Activated CD8-positive, alpha-beta T cell treated with anti-CD3 and anti-CD28 coated beads for 36 hours (primary cell): ENCODE measurements at regions of chr2 and their contacts with region 1.

Region 1: DNA sequence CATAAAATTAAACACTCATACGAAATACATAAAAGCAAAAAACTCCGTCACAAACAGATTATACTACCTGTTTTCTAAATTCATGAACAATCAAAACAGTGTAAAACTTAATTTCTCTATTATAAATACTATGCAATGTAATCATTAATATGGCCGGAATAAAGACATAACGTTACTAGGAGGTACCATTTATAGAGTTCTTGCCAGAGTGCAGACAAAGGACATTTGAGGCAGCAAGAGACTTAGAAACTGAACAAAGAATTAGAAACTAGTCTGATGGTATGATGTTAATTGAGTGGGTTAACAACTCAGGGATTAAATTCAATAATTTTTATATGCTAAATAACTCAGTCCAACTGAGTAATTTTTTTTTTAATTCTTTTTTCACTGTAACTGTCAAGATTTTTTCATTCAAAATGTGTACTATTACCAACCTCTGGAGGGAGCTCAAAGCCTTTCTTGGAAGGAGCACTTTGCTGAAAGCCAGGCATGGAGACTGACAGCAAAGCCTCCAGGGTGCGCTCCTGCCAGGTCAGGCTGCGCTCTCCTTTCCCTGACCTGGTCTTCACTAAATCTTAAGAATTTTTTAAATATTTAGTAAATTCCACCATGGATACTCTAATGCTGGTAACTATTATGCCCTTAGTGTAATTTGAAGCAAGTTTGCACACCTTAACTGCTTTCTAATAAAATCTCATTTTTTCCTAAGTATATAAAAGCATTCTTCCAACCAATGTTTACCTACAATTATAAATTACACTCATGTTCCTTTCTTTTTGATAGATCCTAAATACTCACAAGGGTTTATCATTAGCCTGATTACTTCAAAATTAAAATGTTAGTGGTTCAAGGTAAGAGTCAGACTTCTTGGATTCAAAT is 34.1 kb downstream of the WDR35 start:
- DNase-seq: peak; percentile 54
- ATAC-seq: peak; percentile 86
- H3K4me3 Mint-ChIP-seq: no peak overlapping the region
- H3K27ac Mint-ChIP-seq: no peak overlapping the region
- H3K4me1 Mint-ChIP-seq: no peaks in the 10 kb centered on the region
- H3K27me3 Mint-ChIP-seq: no peaks in the 10 kb centered on the region
- CTCF ChIP-seq: peak; percentile 80

Region 2: GRCh38 chr2:20097879-20098714 is 142.3 kb after region 1 on chr2:
- CTCF ChIA-PET with region 1: interaction called, 5 read pairs
- POLR2A ChIA-PET with region 1: no interaction called
- intact Hi-C with region 1: loop called (anchors 1 kb)
- DNase-seq: peak; percentile 87
- ATAC-seq: peak; percentile 99
- H3K4me3 Mint-ChIP-seq: no peak overlapping the region
- H3K27ac Mint-ChIP-seq: no peak overlapping the region
- H3K4me1 Mint-ChIP-seq: no peaks in the 10 kb centered on the region
- H3K27me3 Mint-ChIP-seq: peaks cover 8% of the 10 kb centered on the region
- CTCF ChIP-seq: peak; percentile 89